Activated naive CD4-positive, alpha-beta T cell treated with anti-CD3 and anti-CD28 coated beads for 36 hours (primary cell): ENCODE measurements at regions of chr12 and their contacts with region 1.

Region 1: GRCh38 chr12:34022079-34022830 is at the start of gene ALG10:
- DNase-seq: peak; percentile 98
- H3K4me3 Mint-ChIP-seq: peak within 1 kb of the TSS; percentile 96
- H3K27ac Mint-ChIP-seq: peak within 1 kb of the TSS; percentile 95
- H3K4me1 Mint-ChIP-seq: peaks cover 18% of the 10 kb centered on the region
- H3K27me3 Mint-ChIP-seq: no peaks in the 10 kb centered on the region
- total RNA-seq, gene ALG10: 21.6 to 23.9 TPM

Region 2: DNA sequence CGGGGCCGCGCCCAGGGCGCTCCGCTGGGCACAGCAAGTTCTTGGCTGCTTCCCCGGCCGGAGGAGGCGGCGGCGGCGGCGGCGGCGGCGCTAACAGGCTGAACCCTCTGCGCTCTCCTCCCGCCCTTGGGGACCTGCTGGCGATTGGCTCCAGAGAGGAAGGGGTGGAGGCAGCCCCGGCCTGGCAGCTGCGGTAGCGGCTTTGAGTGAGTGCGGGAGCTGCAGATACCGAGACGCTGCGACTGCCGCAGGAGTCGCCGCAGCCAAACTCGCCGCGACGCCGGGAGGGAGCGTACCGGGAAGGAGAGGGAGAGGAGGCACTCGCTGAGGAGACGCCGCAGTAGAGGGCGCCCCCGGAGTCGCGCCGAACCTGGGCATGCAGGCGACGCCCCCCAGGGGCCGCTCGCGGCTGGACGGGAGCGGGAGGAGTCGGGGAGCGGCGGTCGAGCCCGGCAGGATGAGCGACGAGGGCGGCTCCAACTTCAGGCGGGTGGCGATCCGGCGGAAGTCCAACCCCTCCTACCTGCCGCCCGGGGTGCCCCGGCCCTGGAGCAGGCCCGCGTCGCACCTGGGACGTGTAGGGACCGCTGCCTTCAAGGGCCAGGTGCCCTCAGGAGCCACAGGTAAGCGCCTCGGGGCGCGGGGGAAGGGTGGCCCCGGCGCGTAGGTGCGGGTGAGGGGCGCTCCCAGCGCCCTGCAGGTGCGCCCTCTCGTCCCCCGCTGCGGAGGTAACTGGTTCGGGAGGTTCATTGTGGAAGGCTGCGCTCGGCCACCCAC is 1622.7 kb before region 1 on chr12 and contains the start of gene FGD4:
- CTCF ChIA-PET with region 1: no interaction called
- intact Hi-C with region 1: loop called (anchors 10 kb)
- DNase-seq: peak; percentile 76
- H3K4me3 Mint-ChIP-seq: peak within 1 kb of the TSS; percentile 88
- H3K27ac Mint-ChIP-seq: no peak within 1 kb of the TSS
- H3K4me1 Mint-ChIP-seq: no peaks in the 10 kb centered on the region
- H3K27me3 Mint-ChIP-seq: peaks cover 38% of the 10 kb centered on the region
- total RNA-seq, gene FGD4: 0.15 to 0.17 TPM

Region 3: DNA sequence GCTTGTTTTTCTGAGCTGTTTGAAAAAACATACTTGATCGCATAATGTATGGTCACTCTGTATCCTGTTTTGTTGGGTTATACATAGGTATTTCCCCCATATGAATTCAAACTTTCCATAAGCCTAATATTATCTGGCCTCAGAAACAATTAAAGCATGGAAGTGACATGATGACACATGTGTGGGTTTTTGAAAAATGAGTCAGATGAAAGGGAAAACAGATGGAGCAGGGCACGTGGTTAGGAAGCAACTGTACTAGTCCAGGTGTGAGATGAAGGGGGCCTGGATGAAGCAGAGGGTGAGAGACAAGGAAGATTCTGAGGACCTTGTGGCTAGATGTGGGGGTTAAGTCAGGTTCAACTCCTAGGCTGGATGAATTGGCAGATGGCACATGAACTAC is 1435.9 kb before region 1 on chr12:
- CTCF ChIA-PET with region 1: no interaction called
- intact Hi-C with region 1: loop called (anchors 1 kb)
- DNase-seq: no peak
- H3K4me3 Mint-ChIP-seq: no peak overlapping the region
- H3K27ac Mint-ChIP-seq: no peak overlapping the region
- H3K4me1 Mint-ChIP-seq: peaks cover 48% of the 10 kb centered on the region
- H3K27me3 Mint-ChIP-seq: no peaks in the 10 kb centered on the region

Region 4: GRCh38 chr12:32918890-32919801 is 1103.1 kb before region 1 on chr12:
- CTCF ChIA-PET with region 1: no interaction called
- intact Hi-C with region 1: loop called (anchors 2 kb)
- DNase-seq: peak; percentile 8
- H3K4me3 Mint-ChIP-seq: no peak overlapping the region
- H3K27ac Mint-ChIP-seq: no peak overlapping the region
- H3K4me1 Mint-ChIP-seq: no peaks in the 10 kb centered on the region
- H3K27me3 Mint-ChIP-seq: peaks cover 14% of the 10 kb centered on the region

Region 5: DNA sequence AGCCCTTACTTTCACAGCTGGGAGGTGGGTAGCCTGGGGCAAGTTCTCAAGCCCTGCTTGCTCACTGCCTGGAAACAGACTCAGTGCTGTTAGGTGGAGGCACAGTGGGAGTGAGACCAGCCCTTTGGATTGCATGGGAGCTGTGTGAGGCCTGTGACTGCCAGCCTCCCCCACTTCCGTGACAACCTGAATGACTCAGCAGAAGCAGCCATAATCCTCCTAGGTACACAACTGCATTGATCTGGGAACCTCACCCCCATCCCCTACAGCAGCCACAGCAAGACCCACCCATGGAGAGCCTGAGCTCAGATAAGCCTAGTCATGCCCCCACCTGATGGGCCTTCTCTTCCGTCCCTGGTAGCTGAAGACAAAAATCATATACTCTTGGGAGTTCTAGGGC is 26.5 kb after region 1 on chr12:
- CTCF ChIA-PET with region 1: no interaction called
- intact Hi-C with region 1: no loop called
- DNase-seq: no peak
- H3K4me3 Mint-ChIP-seq: no peak overlapping the region
- H3K27ac Mint-ChIP-seq: no peak overlapping the region
- H3K4me1 Mint-ChIP-seq: no peaks in the 10 kb centered on the region
- H3K27me3 Mint-ChIP-seq: peaks cover 2% of the 10 kb centered on the region

Region 6: DNA sequence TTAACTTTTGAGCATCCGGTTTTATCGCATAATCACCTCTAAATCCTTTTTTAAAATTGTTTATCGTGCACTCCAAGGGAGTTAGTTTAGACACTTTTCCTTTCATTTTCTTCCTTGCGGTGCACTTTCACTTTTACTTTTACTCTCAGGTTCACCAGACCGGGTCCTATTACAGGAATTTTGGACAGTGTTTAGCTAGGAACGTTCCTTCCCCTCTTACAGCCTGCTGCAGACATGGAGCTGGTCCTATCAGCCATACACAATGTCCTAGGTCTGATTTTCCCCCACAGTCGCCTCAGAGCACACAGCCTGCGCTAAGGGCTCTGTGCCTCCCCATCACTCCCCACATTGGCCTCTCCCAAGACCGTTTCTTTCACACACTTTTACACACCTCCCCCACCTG is 104.0 kb after region 1 on chr12:
- CTCF ChIA-PET with region 1: no interaction called
- intact Hi-C with region 1: loop called (anchors 5 kb)
- DNase-seq: no peak
- H3K4me3 Mint-ChIP-seq: peak overlapping the region; percentile 3
- H3K27ac Mint-ChIP-seq: no peak overlapping the region
- H3K4me1 Mint-ChIP-seq: peaks cover 9% of the 10 kb centered on the region
- H3K27me3 Mint-ChIP-seq: peaks cover 30% of the 10 kb centered on the region